B cell (primary cell): ENCODE measurements at regions of chr1 and their contacts with region 1.

Region 1: DNA sequence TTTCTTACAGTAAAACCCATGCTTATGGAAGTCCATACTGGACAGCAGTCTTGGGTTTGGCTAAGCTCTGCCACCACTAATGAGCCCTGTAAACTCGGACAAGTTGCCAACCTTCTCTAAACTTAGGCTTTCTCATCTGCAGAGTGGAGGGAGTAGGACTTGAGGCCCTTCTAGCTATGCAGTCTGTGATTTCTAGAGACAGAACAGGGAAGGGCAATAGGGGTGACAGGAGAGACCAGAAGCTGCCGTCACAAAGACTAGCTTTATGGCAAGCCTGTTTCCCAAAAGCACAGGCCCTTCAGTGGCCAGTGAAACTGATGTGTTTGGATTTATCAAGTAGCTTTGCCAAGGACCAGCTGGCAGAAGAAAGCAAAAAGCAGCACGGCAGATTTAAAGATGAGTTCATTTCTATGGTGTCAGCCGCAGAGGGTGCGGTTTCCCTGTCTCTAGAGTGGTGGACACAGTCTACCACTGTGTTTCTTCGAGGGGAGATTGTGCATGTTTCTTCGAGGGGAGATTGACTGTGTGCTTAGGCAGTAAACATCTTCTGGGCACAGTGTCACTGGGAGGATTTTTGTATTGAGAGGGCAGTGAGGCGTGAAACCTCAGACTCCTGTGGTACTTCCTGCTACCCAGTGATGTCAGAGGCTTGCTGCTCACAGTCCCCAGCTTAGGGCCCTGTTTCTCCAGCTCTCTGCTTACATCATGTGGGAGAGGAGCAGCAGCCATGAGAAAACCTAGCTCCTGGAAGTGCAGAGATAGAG is 119.0 kb downstream of the ROR1 start:
- DNase-seq: peak; percentile 90
- ATAC-seq: peak; percentile 83
- H3K4me3 ChIP-seq: peak overlapping the region in 1 of 5 experiments; percentile 5
- H3K4me3 Mint-ChIP-seq: peak overlapping the region; percentile 69
- H3K27ac ChIP-seq: peak overlapping the region; percentile 73 to 74
- H3K27ac Mint-ChIP-seq: peak overlapping the region; percentile 94
- H3K4me1 ChIP-seq: peaks cover 38 to 53% of the 10 kb centered on the region in 2 donors
- H3K4me1 Mint-ChIP-seq: peaks cover 52% of the 10 kb centered on the region
- H3K27me3 ChIP-seq: peaks cover 0 to 8% (median 6%) of the 10 kb centered on the region in 4 experiments
- H3K27me3 Mint-ChIP-seq: peaks cover 22% of the 10 kb centered on the region
- CTCF ChIP-seq: no peak

Region 2: GRCh38 chr1:63593303-63593885 is 299.4 kb before region 1 on chr1 and contains the start of gene PGM1:
- CTCF ChIA-PET with region 1: no interaction called
- POLR2A ChIA-PET with region 1: interaction called, 3 read pairs
- intact Hi-C with region 1: loop called (anchors 10 kb)
- DNase-seq: peak; percentile 81
- ATAC-seq: peak; percentile 81
- H3K4me3 ChIP-seq: peak within 1 kb of the TSS; percentile 32 to 92 (median 80)
- H3K4me3 Mint-ChIP-seq: peak within 1 kb of the TSS; percentile 98
- H3K27ac ChIP-seq: peak within 1 kb of the TSS; percentile 78 to 88
- H3K27ac Mint-ChIP-seq: peak within 1 kb of the TSS; percentile 98
- H3K4me1 ChIP-seq: peaks cover 6 to 9% of the 10 kb centered on the region in 2 donors
- H3K4me1 Mint-ChIP-seq: peaks cover 13% of the 10 kb centered on the region
- H3K27me3 ChIP-seq: no peaks in the 10 kb centered on the region
- H3K27me3 Mint-ChIP-seq: no peaks in the 10 kb centered on the region
- CTCF ChIP-seq: no peak
- total RNA-seq, gene PGM1: 13.2 and 17.3 TPM in 2 replicates

Region 3: GRCh38 chr1:63773815-63774616 is 118.8 kb before region 1 on chr1 and contains the start of gene ROR1:
- CTCF ChIA-PET with region 1: interaction called, 6 read pairs
- POLR2A ChIA-PET with region 1: no interaction called
- intact Hi-C with region 1: loop called (anchors 5 kb)
- DNase-seq: peak; percentile 72
- ATAC-seq: peak; percentile 90
- H3K4me3 ChIP-seq: peak within 1 kb of the TSS; percentile 42 to 72 (median 53)
- H3K4me3 Mint-ChIP-seq: peak within 1 kb of the TSS; percentile 86
- H3K27ac ChIP-seq: no peak within 1 kb of the TSS
- H3K27ac Mint-ChIP-seq: peak within 1 kb of the TSS; percentile 42
- H3K4me1 ChIP-seq: peaks cover 12 to 21% of the 10 kb centered on the region in 2 donors
- H3K4me1 Mint-ChIP-seq: peaks cover 20% of the 10 kb centered on the region
- H3K27me3 ChIP-seq: peaks cover 0 to 31% (median 25%) of the 10 kb centered on the region in 4 experiments
- H3K27me3 Mint-ChIP-seq: peaks cover 55% of the 10 kb centered on the region
- CTCF ChIP-seq: peak; percentile 43
- total RNA-seq, gene ROR1: 16.0 and 16.3 TPM in 2 replicates

Region 4: GRCh38 chr1:63828322-63829044 is 64.3 kb before region 1 on chr1:
- CTCF ChIA-PET with region 1: interaction called, 4 read pairs
- POLR2A ChIA-PET with region 1: interaction called, 5 read pairs
- intact Hi-C with region 1: loop called (anchors 1 kb)
- DNase-seq: peak; percentile 53
- ATAC-seq: peak; percentile 90
- H3K4me3 ChIP-seq: no peak overlapping the region
- H3K4me3 Mint-ChIP-seq: peak overlapping the region; percentile 24
- H3K27ac ChIP-seq: peak overlapping the region; percentile 40 to 59
- H3K27ac Mint-ChIP-seq: peak overlapping the region; percentile 64
- H3K4me1 ChIP-seq: peaks cover 35 to 43% of the 10 kb centered on the region in 2 donors
- H3K4me1 Mint-ChIP-seq: peaks cover 51% of the 10 kb centered on the region
- H3K27me3 ChIP-seq: no peaks in the 10 kb centered on the region
- H3K27me3 Mint-ChIP-seq: peaks cover 4% of the 10 kb centered on the region
- CTCF ChIP-seq: no peak

Region 5: GRCh38 chr1:63847308-63847910 is 45.4 kb before region 1 on chr1:
- CTCF ChIA-PET with region 1: no interaction called
- POLR2A ChIA-PET with region 1: no interaction called
- intact Hi-C with region 1: no loop called
- DNase-seq: no peak
- ATAC-seq: no peak
- H3K4me3 ChIP-seq: no peak overlapping the region
- H3K4me3 Mint-ChIP-seq: no peak overlapping the region
- H3K27ac ChIP-seq: no peak overlapping the region
- H3K27ac Mint-ChIP-seq: no peak overlapping the region
- H3K4me1 ChIP-seq: no peaks in the 10 kb centered on the region
- H3K4me1 Mint-ChIP-seq: no peaks in the 10 kb centered on the region
- H3K27me3 ChIP-seq: no peaks in the 10 kb centered on the region
- H3K27me3 Mint-ChIP-seq: peaks cover 8% of the 10 kb centered on the region
- CTCF ChIP-seq: no peak

Region 6: GRCh38 chr1:63902844-63903589 is 10.2 kb after region 1 on chr1:
- CTCF ChIA-PET with region 1: interaction called, 4 read pairs
- POLR2A ChIA-PET with region 1: interaction called, 3 read pairs
- intact Hi-C with region 1: loop called (anchors 2 kb)
- DNase-seq: no peak
- ATAC-seq: no peak
- H3K4me3 ChIP-seq: no peak overlapping the region
- H3K4me3 Mint-ChIP-seq: no peak overlapping the region
- H3K27ac ChIP-seq: no peak overlapping the region
- H3K27ac Mint-ChIP-seq: no peak overlapping the region
- H3K4me1 ChIP-seq: peaks cover 7 to 9% of the 10 kb centered on the region in 2 donors
- H3K4me1 Mint-ChIP-seq: peaks cover 11% of the 10 kb centered on the region
- H3K27me3 ChIP-seq: peaks cover 0 to 15% (median 2%) of the 10 kb centered on the region in 4 experiments
- H3K27me3 Mint-ChIP-seq: peaks cover 33% of the 10 kb centered on the region
- CTCF ChIP-seq: no peak